Ascending aorta (tissue), 2 donors: ENCODE measurements at regions of chr5 and their contacts with region 1.

Region 1: DNA sequence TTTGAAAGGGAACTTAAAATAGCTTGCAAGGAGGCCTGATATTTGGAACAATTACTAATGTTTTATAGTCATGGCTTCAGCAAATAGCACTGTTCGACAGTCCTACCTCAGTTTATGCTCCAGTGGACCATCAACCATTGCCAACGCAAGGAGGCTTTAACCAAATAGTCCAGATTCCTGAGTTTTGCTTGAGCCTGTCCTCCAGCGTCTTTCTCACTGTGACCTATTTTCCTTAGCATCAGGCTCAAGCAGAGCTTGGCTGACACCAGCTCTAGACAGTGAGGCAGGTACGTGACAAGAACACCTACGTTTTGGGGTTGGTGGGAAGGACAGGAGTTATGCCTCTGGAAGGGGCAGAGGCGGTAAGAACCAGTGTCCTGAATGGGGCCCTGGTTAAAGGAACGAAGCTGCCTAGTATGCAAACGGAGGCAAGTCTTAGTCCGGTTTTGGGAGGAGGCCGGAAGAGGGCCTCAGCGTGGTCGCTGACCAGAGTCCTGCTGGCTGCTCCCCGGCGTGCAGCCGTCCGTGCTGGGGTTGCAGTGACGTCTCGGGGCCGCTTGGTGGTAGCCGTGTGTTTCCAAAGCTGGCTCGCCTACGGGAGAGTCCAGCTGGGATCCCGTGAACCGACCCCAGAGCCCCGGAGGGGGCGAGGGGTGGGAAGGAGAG is 998 bp upstream of the FGF18 start:
- DNase-seq: peak in 1 of 2 donors; percentile 84
- H3K4me3 ChIP-seq: peak overlapping the region; percentile 59 to 65
- H3K27ac ChIP-seq: no peak overlapping the region
- H3K4me1 ChIP-seq: peaks cover 14 to 15% of the 10 kb centered on the region in 2 donors
- H3K27me3 ChIP-seq: no peaks in the 10 kb centered on the region
- CTCF ChIP-seq: peak; percentile 93 to 99 (median 99)

Region 2: GRCh38 chr5:171484460-171484899 is 66.0 kb after region 1 on chr5:
- intact Hi-C with region 1: loop called (anchors 2 kb)
- DNase-seq: no peak
- H3K4me3 ChIP-seq: no peak overlapping the region
- H3K27ac ChIP-seq: peak overlapping the region in 1 of 2 donors; percentile 72
- H3K4me1 ChIP-seq: peaks cover 0 to 5% of the 10 kb centered on the region in 2 donors
- H3K27me3 ChIP-seq: no peaks in the 10 kb centered on the region
- CTCF ChIP-seq: peak; percentile 56 to 73 (median 64)

Region 3: GRCh38 chr5:171595801-171596231 is 177.4 kb after region 1 on chr5:
- intact Hi-C with region 1: loop called (anchors 2 kb)
- DNase-seq: peak; percentile 22 to 75
- H3K4me3 ChIP-seq: peak overlapping the region in 1 of 2 donors; percentile 7
- H3K27ac ChIP-seq: peak overlapping the region; percentile 65 to 68
- H3K4me1 ChIP-seq: peaks cover 5 to 12% of the 10 kb centered on the region in 2 donors
- H3K27me3 ChIP-seq: no peaks in the 10 kb centered on the region
- CTCF ChIP-seq: no peak

Region 4: DNA sequence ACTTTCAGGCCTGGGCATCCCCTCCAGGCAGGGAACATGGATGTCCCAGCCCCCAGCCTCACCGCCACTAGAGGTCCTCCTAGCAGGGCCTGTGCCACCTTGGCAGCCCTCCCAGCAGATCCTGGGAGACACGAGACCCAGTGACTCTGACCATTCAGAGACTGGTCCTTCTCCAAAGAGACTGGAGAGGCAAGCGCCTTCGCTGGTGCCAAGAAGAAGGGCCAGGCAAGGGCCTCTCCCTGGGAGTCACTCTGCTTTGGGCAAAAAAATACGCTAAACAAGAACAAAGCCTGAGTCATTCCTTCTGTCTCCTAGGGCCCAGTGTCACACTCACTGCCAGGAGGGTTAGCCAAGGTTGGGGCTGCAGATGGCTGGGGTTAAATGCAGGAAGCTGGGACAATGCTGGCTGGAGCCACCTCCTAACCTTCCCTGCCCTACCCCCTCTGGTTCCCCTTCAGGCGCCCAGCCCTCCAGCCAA is 331.9 kb after region 1 on chr5:
- intact Hi-C with region 1: loop called (anchors 10 kb)
- DNase-seq: no peak
- H3K4me3 ChIP-seq: no peak overlapping the region
- H3K27ac ChIP-seq: no peak overlapping the region
- H3K4me1 ChIP-seq: no peaks in the 10 kb centered on the region
- H3K27me3 ChIP-seq: no peaks in the 10 kb centered on the region
- CTCF ChIP-seq: no peak

Region 5: GRCh38 chr5:171907725-171908343 is 489.4 kb after region 1 on chr5:
- intact Hi-C with region 1: loop called (anchors 1 kb)
- DNase-seq: no peak
- H3K4me3 ChIP-seq: no peak overlapping the region
- H3K27ac ChIP-seq: no peak overlapping the region
- H3K4me1 ChIP-seq: peaks cover 0 to 5% of the 10 kb centered on the region in 2 donors
- H3K27me3 ChIP-seq: no peaks in the 10 kb centered on the region
- CTCF ChIP-seq: peak; percentile 69 to 79 (median 73)

Region 6: DNA sequence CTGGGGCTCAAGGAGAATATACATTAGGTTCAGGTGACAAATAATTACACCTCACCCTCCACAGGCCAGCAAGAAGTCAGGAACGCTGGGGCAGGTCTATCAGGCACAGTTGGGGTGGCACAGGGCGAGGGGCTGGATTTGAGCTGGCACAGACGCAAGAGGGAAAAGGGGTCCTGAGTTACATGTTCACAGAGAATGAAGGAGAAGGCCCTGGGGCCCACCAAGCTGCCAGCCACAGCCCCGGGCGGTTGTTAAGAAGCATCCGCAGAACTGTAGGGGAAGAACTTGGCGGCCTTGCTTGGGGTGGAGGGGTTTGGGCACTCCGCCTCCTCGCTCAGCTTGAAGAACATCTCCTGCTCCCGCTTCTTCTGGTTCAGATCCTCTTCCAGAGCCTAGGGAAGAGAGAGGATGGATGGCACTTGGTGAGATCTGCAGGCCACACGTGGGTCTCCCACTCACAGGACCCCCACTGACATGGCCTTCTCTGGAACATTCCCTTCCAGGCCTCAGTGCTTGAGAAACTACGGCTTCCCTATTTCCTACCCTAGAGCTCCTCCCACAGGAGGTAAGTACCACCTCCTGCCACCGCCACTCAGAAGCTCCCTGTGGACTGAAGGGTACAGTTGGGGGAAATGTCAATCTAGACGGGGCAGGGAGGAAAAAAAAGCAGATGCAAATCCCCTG is 626.3 kb after region 1 on chr5:
- intact Hi-C with region 1: loop called (anchors 5 kb)
- DNase-seq: no peak
- H3K4me3 ChIP-seq: no peak overlapping the region
- H3K27ac ChIP-seq: no peak overlapping the region
- H3K4me1 ChIP-seq: no peaks in the 10 kb centered on the region
- H3K27me3 ChIP-seq: no peaks in the 10 kb centered on the region
- CTCF ChIP-seq: no peak